CD8-positive, alpha-beta T cell (primary cell): ENCODE measurements at regions of chr6 and their contacts with region 1.

Region 1: DNA sequence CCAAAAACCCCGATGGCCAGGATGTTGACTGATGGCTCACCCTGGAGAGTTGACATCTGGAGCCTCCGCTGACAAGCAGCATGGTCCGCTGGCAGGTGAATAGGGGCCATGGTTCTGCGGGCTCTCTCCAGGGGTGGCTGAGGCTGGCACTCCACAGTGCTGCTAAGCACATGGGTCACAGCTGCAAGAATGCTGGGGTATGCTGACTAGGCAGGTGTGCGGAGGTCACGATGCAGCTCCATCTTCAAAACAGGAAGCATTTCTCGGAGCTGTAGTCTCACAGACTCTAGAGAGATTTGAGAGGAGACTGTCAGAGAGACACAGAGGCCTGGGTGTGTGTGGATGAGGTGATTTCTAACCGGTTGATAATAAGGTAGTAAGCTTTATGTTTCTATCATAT is 341.6 kb downstream of the NRN1 start:
- DNase-seq: peak in 8 of 9 experiments; percentile 9 to 72 (median 34)
- ATAC-seq: peak; percentile 72
- H3K4me3 ChIP-seq: no peak overlapping the region
- H3K4me3 Mint-ChIP-seq: peak overlapping the region; percentile 71
- H3K27ac ChIP-seq: no peak overlapping the region
- H3K27ac Mint-ChIP-seq: peak overlapping the region; percentile 94
- H3K4me1 ChIP-seq: peaks cover 64% of the 10 kb centered on the region
- H3K4me1 Mint-ChIP-seq: peaks cover 75% of the 10 kb centered on the region
- H3K27me3 ChIP-seq: no peaks in the 10 kb centered on the region
- H3K27me3 Mint-ChIP-seq: no peaks in the 10 kb centered on the region
- CTCF ChIP-seq: no peak

Region 2: GRCh38 chr6:5584078-5584482 is 81.1 kb before region 1 on chr6:
- CTCF ChIA-PET with region 1: interaction called, 3 read pairs
- POLR2A ChIA-PET with region 1: interaction called, 3 read pairs
- intact Hi-C with region 1: loop called in 1 of 2 experiments (anchors 10 kb)
- DNase-seq: no peak
- ATAC-seq: no peak
- H3K4me3 ChIP-seq: no peak overlapping the region
- H3K4me3 Mint-ChIP-seq: no peak overlapping the region
- H3K27ac ChIP-seq: no peak overlapping the region
- H3K27ac Mint-ChIP-seq: peak overlapping the region; percentile 69
- H3K4me1 ChIP-seq: peaks cover 14% of the 10 kb centered on the region
- H3K4me1 Mint-ChIP-seq: peaks cover 29% of the 10 kb centered on the region
- H3K27me3 ChIP-seq: no peaks in the 10 kb centered on the region
- H3K27me3 Mint-ChIP-seq: no peaks in the 10 kb centered on the region
- CTCF ChIP-seq: no peak

Region 3: DNA sequence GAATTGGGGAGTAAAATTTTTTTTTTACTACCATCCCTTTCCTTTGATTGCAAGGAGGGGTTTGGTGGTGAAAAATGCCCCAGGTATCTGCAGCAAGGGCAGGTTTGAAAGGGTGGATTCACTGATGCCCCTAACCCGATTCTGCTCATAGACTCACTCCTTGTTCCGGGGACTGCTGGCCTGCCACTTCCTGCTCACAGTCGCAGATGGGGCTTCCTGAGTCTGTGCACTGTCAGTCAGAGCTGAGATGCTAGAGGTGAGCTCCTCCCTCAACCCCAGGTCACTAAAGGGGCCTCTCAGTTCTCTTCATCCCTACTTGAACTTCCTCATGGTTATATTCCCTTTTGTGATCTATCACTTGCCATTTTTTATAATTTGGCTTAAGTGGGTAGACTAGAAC is 45.9 kb before region 1 on chr6:
- CTCF ChIA-PET with region 1: interaction called, 4 read pairs
- POLR2A ChIA-PET with region 1: interaction called, 3 read pairs
- intact Hi-C with region 1: loop called in 1 of 2 experiments (anchors 5 kb)
- DNase-seq: peak; percentile 5 to 73 (median 49)
- ATAC-seq: peak; percentile 99
- H3K4me3 ChIP-seq: peak overlapping the region in 1 of 2 experiments; percentile 26
- H3K4me3 Mint-ChIP-seq: peak overlapping the region; percentile 45
- H3K27ac ChIP-seq: peak overlapping the region; percentile 49 to 65
- H3K27ac Mint-ChIP-seq: peak overlapping the region; percentile 89
- H3K4me1 ChIP-seq: peaks cover 15% of the 10 kb centered on the region
- H3K4me1 Mint-ChIP-seq: peaks cover 31% of the 10 kb centered on the region
- H3K27me3 ChIP-seq: no peaks in the 10 kb centered on the region
- H3K27me3 Mint-ChIP-seq: no peaks in the 10 kb centered on the region
- CTCF ChIP-seq: no peak

Region 4: GRCh38 chr6:5838656-5839396 is 173.7 kb after region 1 on chr6:
- CTCF ChIA-PET with region 1: no interaction called
- POLR2A ChIA-PET with region 1: no interaction called
- intact Hi-C with region 1: no loop called
- DNase-seq: no peak
- ATAC-seq: no peak
- H3K4me3 ChIP-seq: no peak overlapping the region
- H3K4me3 Mint-ChIP-seq: no peak overlapping the region
- H3K27ac ChIP-seq: no peak overlapping the region
- H3K27ac Mint-ChIP-seq: no peak overlapping the region
- H3K4me1 ChIP-seq: no peaks in the 10 kb centered on the region
- H3K4me1 Mint-ChIP-seq: no peaks in the 10 kb centered on the region
- H3K27me3 ChIP-seq: no peaks in the 10 kb centered on the region
- H3K27me3 Mint-ChIP-seq: no peaks in the 10 kb centered on the region
- CTCF ChIP-seq: no peak

Region 5: GRCh38 chr6:5981126-5982026 is 316.2 kb after region 1 on chr6:
- CTCF ChIA-PET with region 1: no interaction called
- POLR2A ChIA-PET with region 1: no interaction called
- intact Hi-C with region 1: no loop called
- DNase-seq: no peak
- ATAC-seq: no peak
- H3K4me3 ChIP-seq: no peak overlapping the region
- H3K4me3 Mint-ChIP-seq: no peak overlapping the region
- H3K27ac ChIP-seq: no peak overlapping the region
- H3K27ac Mint-ChIP-seq: no peak overlapping the region
- H3K4me1 ChIP-seq: peaks cover 13% of the 10 kb centered on the region
- H3K4me1 Mint-ChIP-seq: peaks cover 14% of the 10 kb centered on the region
- H3K27me3 ChIP-seq: peaks cover 0 to 3% of the 10 kb centered on the region in 2 experiments
- H3K27me3 Mint-ChIP-seq: peaks cover 6% of the 10 kb centered on the region
- CTCF ChIP-seq: no peak

Region 6: DNA sequence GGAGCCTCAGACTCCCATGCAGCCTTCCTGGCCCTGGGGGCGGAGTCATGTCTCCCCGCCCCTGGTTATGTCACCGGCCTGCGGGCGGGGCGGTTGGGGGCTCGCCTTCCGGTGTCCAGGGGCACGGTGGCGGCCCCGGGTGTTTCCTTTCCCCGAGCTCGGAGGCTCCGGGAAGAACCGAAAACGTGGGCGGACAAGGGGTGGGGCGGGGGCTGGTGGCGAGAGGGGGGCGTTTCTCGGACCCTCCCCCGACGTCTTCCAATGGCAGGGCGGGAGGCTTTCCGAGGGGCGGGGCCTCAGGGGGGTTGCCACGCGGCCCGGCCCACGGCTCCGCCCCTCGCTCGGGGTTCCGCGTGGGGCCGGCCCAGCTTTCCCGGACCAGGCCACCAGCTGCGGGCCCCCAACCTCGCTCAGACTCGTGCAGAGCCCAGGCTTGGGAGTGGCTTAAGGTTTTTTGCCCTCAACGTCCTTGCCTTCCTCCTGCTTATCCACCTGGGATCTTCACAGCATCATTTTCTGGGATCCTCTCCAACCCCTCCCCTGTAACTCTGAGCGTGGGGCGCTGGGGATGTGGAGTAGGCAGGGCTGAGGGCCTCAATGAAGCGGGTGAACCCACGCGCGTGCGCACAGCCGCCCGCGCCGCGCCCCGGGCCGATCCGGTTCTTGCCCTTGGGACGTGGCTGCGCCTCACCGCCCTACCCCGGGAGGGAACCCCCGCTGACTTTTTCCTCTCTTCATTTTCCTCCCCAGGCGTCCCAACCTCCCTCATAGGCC is 343.7 kb after region 1 on chr6:
- CTCF ChIA-PET with region 1: no interaction called
- POLR2A ChIA-PET with region 1: interaction called, 4 read pairs
- intact Hi-C with region 1: loop called in 1 of 2 experiments (anchors 10 kb)
- DNase-seq: peak in 4 of 9 experiments; percentile 29 to 64 (median 46)
- ATAC-seq: peak; percentile 47
- H3K4me3 ChIP-seq: peak overlapping the region; percentile 44 to 47
- H3K4me3 Mint-ChIP-seq: peak overlapping the region; percentile 64
- H3K27ac ChIP-seq: no peak overlapping the region
- H3K27ac Mint-ChIP-seq: no peak overlapping the region
- H3K4me1 ChIP-seq: peaks cover 39% of the 10 kb centered on the region
- H3K4me1 Mint-ChIP-seq: peaks cover 37% of the 10 kb centered on the region
- H3K27me3 ChIP-seq: peaks cover 45 to 46% of the 10 kb centered on the region in 2 experiments
- H3K27me3 Mint-ChIP-seq: peaks cover 70% of the 10 kb centered on the region
- CTCF ChIP-seq: no peak

Region 7: DNA sequence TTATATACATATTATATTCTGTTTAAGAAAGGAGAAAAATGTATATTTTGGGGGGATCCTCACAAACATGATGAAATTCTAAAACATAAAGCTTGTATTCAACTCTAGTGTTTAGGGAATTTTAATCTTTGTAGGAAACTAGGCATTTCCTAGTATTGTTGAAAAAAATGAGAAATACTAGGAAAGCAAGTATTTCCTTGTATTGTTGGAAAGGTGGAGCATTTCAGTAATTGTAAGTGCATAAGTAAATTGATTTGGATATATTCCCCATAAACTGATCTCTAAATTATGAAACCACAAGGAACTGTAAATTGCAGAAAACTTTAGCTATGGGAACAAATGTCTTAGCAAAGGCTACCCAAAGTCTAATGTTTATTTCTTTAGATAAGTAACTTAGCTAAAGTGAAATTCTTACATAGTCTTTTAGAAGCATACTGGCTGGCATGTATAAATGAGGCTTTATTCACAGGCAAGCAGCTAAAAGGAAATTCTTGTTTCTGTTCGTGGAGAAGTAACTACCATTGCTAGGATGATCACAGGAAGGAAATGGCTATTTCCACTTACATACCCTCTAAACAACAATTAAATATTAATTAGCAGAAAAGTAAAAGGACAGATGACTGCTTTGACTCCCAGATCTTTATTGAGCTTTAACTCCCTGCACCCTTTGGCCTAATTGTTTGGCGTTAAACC is 361.5 kb after region 1 on chr6:
- CTCF ChIA-PET with region 1: no interaction called
- POLR2A ChIA-PET with region 1: no interaction called
- intact Hi-C with region 1: no loop called
- DNase-seq: no peak
- ATAC-seq: no peak
- H3K4me3 ChIP-seq: no peak overlapping the region
- H3K4me3 Mint-ChIP-seq: no peak overlapping the region
- H3K27ac ChIP-seq: no peak overlapping the region
- H3K27ac Mint-ChIP-seq: no peak overlapping the region
- H3K4me1 ChIP-seq: no peaks in the 10 kb centered on the region
- H3K4me1 Mint-ChIP-seq: no peaks in the 10 kb centered on the region
- H3K27me3 ChIP-seq: peaks cover 0 to 2% of the 10 kb centered on the region in 2 experiments
- H3K27me3 Mint-ChIP-seq: peaks cover 30% of the 10 kb centered on the region
- CTCF ChIP-seq: no peak